Activated naive CD4-positive, alpha-beta T cell treated with anti-CD3 and anti-CD28 coated beads for 36 hours (primary cell): ENCODE measurements at regions of chr19 and their contacts with region 1.

Region 1: GRCh38 chr19:44447916-44448674 is at the start of gene ZNF229:
- DNase-seq: peak; percentile 82
- H3K4me3 Mint-ChIP-seq: peak within 1 kb of the TSS; percentile 77
- H3K27ac Mint-ChIP-seq: no peak within 1 kb of the TSS
- H3K4me1 Mint-ChIP-seq: peaks cover 7% of the 10 kb centered on the region
- H3K27me3 Mint-ChIP-seq: peaks cover 2% of the 10 kb centered on the region
- total RNA-seq, gene ZNF229: 0.57 to 0.79 TPM

Region 2: GRCh38 chr19:44401139-44402115 is 46.7 kb before region 1 on chr19 and contains the start of gene ZNF285:
- CTCF ChIA-PET with region 1: no interaction called
- intact Hi-C with region 1: loop called (anchors 1 kb)
- DNase-seq: peak; percentile 86
- H3K4me3 Mint-ChIP-seq: peak within 1 kb of the TSS; percentile 83
- H3K27ac Mint-ChIP-seq: no peak within 1 kb of the TSS
- H3K4me1 Mint-ChIP-seq: peaks cover 9% of the 10 kb centered on the region
- H3K27me3 Mint-ChIP-seq: peaks cover 2% of the 10 kb centered on the region
- total RNA-seq, gene ZNF285: 0.67 to 0.86 TPM